Activated naive CD4-positive, alpha-beta T cell treated with anti-CD3 and anti-CD28 coated beads for 36 hours (primary cell): ENCODE measurements at regions of chr9 and their contacts with region 1.

Region 1: GRCh38 chr9:97803167-97804058 is 49.6 kb upstream of the FOXE1 start:
- DNase-seq: peak; percentile 72
- H3K4me3 Mint-ChIP-seq: peak overlapping the region; percentile 77
- H3K27ac Mint-ChIP-seq: no peak overlapping the region
- H3K4me1 Mint-ChIP-seq: peaks cover 8% of the 10 kb centered on the region
- H3K27me3 Mint-ChIP-seq: peaks cover 15% of the 10 kb centered on the region

Region 2: GRCh38 chr9:97487107-97487506 is 316.3 kb before region 1 on chr9:
- CTCF ChIA-PET with region 1: no interaction called
- intact Hi-C with region 1: no loop called
- DNase-seq: no peak
- H3K4me3 Mint-ChIP-seq: no peak overlapping the region
- H3K27ac Mint-ChIP-seq: no peak overlapping the region
- H3K4me1 Mint-ChIP-seq: no peaks in the 10 kb centered on the region
- H3K27me3 Mint-ChIP-seq: no peaks in the 10 kb centered on the region

Region 3: DNA sequence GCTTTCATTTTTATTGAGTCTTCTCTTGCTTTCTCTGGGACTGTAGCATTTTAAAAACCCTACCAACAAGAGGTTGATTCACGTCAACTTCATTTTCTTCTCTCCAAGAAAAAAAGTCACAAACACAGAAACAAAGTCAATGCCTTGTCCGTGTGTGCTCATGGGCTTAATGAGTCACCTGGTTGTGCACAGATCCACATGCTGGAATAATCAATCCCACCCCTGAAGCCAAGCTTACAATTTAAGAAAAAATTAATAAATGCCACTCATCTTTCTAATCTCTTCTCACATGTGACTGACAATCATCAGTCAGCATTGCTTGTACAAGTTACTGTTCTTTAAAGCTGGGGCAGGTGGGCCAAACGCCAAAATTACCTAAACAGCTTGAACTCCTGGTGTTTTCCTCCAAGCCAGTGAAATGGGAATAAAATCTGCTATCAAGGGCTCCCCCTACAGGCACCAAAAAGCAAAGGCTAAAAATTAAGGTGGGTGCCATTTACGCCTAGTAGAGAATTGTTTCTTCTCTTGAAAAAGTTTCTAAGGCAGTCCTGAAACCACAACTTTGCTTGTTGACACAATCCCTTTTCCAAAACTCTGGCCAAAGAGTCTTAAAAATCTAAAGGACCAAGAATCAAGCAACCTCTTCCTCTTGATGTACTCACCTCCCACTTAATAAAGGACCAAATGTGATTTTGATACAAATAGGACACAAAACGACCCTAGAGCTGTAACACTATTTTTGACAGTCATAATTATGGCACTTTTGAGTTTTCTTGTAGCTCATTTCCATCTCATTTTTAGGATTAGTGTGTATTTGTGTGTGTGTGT is 97.5 kb after region 1 on chr9:
- CTCF ChIA-PET with region 1: interaction called, 3 read pairs
- intact Hi-C with region 1: loop called (anchors 5 kb)
- DNase-seq: peak; percentile 52
- H3K4me3 Mint-ChIP-seq: no peak overlapping the region
- H3K27ac Mint-ChIP-seq: no peak overlapping the region
- H3K4me1 Mint-ChIP-seq: peaks cover 59% of the 10 kb centered on the region
- H3K27me3 Mint-ChIP-seq: no peaks in the 10 kb centered on the region

Region 4: DNA sequence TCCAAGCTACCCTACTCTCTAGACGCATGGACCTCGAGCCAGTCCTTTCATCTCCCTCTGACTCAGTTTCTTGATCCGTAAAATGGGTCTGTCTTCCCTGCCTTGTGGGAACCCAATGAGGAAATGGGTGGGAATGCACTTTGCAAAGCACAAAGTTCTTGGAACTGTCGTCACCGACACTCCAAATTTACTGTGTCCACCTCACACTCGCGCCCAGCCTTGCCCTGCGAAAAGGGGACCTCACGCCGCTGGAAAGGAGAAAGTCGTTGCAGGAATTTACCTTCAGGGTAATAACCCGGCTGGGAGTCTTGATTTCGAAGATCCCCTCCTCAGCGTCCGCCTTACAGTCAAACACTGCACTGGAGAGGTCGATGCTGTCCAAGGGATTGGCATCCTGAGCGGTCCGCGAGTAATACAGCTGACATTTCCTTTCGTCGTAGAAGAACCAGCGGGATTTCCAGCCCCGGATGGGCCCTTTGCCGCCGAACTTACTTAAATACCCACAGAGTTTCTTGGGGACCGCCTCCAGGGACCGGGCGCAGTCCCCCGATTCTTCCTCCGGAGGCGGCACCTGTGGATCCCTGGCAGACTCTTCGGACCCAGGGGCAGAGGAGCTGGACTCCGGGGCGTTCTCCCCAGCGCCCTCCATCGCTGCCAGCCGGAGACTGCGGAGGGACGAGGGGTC is 451.6 kb after region 1 on chr9:
- CTCF ChIA-PET with region 1: no interaction called
- intact Hi-C with region 1: no loop called
- DNase-seq: peak; percentile 50
- H3K4me3 Mint-ChIP-seq: peak overlapping the region; percentile 86
- H3K27ac Mint-ChIP-seq: no peak overlapping the region
- H3K4me1 Mint-ChIP-seq: peaks cover 25% of the 10 kb centered on the region
- H3K27me3 Mint-ChIP-seq: peaks cover 2% of the 10 kb centered on the region